ENCODE measurements at regions of chr10 and their contacts with region 1.

Region 1: GRCh38 chr10:84269773-84270172 is 24.9 kb downstream of the RGR start:
- DNase-seq: peak; percentile 36 to 80
- H3K4me3 ChIP-seq: no peak overlapping the region
- H3K27ac ChIP-seq: peak overlapping the region; percentile 64
- H3K4me1 ChIP-seq: peaks cover 20% of the 10 kb centered on the region
- H3K27me3 ChIP-seq: no peaks in the 10 kb centered on the region
- CTCF ChIP-seq: no peak

Region 2: DNA sequence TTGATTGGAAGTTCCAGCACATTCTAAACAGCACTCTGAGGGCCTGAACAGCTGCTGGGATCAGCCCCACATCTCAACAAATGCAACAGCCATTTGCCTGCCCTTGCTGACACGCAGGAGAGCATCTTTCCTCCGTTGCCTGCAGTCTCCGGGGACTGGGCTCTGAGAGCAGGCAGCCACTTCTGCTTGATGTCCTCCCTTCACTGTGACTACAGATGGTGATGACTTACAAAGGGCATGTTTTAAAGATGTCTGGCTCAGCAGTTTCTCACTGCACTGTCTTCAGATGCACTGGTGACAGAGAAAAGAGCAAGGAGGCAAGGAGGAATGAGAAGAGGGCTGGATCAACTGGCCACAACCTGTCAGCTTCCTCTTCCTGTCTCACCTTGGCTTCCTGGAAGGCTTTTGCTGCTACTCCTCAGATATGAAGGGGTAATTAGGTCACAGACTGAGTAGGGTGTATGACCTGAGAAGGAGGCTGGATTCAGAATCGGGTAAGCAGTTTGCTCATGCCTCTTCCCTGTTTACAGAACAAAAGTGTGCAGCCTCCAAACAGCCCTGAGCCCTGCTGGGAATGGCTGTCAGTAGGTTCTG is 273.9 kb before region 1 on chr10:
- CTCF ChIA-PET with region 1: no interaction called
- POLR2A ChIA-PET with region 1: no interaction called
- intact Hi-C with region 1: no loop called
- DNase-seq: no peak
- H3K4me3 ChIP-seq: no peak overlapping the region
- H3K27ac ChIP-seq: no peak overlapping the region
- H3K4me1 ChIP-seq: no peaks in the 10 kb centered on the region
- H3K27me3 ChIP-seq: peaks cover 34% of the 10 kb centered on the region
- CTCF ChIP-seq: no peak

Region 3: GRCh38 chr10:84337199-84337598 is 67.4 kb after region 1 on chr10:
- CTCF ChIA-PET with region 1: no interaction called
- POLR2A ChIA-PET with region 1: no interaction called
- intact Hi-C with region 1: loop called (anchors 1 kb)
- DNase-seq: peak in 1 of 2 experiments; percentile 67
- H3K4me3 ChIP-seq: no peak overlapping the region
- H3K27ac ChIP-seq: peak overlapping the region; percentile 5; the same call in 1 of the 2 replicates
- H3K4me1 ChIP-seq: peaks cover 25% of the 10 kb centered on the region
- H3K27me3 ChIP-seq: no peaks in the 10 kb centered on the region
- CTCF ChIP-seq: no peak

Region 4: GRCh38 chr10:84452003-84452402 is 182.2 kb after region 1 on chr10:
- CTCF ChIA-PET with region 1: no interaction called
- POLR2A ChIA-PET with region 1: no interaction called
- intact Hi-C with region 1: no loop called
- DNase-seq: no peak
- H3K4me3 ChIP-seq: no peak overlapping the region
- H3K27ac ChIP-seq: no peak overlapping the region
- H3K4me1 ChIP-seq: no peaks in the 10 kb centered on the region
- H3K27me3 ChIP-seq: no peaks in the 10 kb centered on the region
- CTCF ChIP-seq: no peak

Measured in PC-9 (cell line).